ENCODE measurements at regions of chr1 and their contacts with region 1.

Region 1: DNA sequence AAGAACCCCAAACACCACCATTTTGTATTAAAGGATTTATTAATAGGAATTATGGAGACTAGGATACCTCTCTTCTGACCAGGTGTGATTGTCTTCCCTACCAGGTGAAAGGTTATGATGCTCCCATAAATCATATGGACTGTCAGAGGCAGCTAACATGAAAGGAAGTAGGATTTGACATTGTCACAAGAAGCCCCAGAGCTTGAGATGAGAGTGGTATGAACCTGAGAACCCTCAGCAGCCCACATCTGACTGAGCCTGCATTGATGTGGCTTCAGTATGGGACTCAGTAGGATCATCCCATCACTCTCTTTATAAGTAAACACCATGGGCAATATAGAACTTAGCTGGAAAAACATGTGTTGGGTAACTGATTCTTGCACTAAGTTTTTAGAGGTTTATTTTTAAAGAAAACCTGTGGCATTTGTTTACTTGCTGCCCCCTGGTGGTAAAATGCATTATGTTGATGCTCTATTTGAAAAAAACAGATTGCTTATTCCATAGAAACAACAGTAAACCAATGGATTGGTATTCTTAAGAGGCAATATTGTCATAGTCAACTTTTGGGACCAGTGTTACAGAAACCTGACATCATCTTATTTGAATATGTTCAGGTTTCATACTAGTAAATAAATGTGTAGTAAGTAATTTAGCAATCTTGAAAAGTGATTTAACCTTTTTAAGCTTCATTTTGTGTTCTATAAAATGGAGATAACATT is 16.6 kb upstream of the CACYBP start:
- DNase-seq: no peak
- H3K4me3 Mint-ChIP-seq: no peak overlapping the region
- H3K27ac Mint-ChIP-seq: no peak overlapping the region
- H3K4me1 Mint-ChIP-seq: peaks cover 17% of the 10 kb centered on the region
- H3K27me3 Mint-ChIP-seq: no peaks in the 10 kb centered on the region

Region 2: DNA sequence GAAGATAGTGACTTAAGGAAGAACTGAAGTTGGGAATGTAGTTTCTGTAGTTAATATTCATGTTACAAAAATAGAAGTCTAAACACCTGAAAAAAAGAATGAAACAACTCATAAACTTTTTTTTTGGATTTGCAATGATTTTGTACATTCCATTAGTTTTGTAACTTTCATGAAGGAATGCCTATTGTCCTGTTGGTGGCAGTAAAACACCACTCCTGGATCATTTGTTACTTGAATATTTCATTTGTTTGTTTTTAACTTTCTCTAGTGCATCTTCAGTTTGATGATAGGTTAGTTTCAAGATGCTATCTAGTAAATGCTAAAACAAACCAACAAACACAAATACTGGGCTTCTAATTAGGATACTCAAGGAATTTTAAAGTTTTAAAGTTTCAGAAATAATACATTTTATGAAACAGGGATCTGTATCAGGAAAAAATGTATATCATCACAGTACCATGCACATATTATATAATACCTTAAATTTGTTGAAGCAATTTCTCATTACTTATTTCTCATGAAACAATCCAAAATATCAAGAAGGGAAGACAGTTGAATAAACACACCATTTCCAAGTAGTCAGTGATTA is 213.1 kb before region 1 on chr1:
- CTCF ChIA-PET with region 1: interaction called, 10 read pairs
- POLR2A ChIA-PET with region 1: no interaction called
- DNase-seq: no peak
- H3K4me3 Mint-ChIP-seq: no peak overlapping the region
- H3K27ac Mint-ChIP-seq: no peak overlapping the region
- H3K4me1 Mint-ChIP-seq: peaks cover 6% of the 10 kb centered on the region
- H3K27me3 Mint-ChIP-seq: no peaks in the 10 kb centered on the region